ENCODE measurements at regions of chr3 and their contacts with region 1.

Region 1: GRCh38 chr3:129673882-129674797 is 67.7 kb upstream of the PLXND1 start:
- DNase-seq: peak; percentile 27
- CTCF ChIP-seq: no peak

Region 2: DNA sequence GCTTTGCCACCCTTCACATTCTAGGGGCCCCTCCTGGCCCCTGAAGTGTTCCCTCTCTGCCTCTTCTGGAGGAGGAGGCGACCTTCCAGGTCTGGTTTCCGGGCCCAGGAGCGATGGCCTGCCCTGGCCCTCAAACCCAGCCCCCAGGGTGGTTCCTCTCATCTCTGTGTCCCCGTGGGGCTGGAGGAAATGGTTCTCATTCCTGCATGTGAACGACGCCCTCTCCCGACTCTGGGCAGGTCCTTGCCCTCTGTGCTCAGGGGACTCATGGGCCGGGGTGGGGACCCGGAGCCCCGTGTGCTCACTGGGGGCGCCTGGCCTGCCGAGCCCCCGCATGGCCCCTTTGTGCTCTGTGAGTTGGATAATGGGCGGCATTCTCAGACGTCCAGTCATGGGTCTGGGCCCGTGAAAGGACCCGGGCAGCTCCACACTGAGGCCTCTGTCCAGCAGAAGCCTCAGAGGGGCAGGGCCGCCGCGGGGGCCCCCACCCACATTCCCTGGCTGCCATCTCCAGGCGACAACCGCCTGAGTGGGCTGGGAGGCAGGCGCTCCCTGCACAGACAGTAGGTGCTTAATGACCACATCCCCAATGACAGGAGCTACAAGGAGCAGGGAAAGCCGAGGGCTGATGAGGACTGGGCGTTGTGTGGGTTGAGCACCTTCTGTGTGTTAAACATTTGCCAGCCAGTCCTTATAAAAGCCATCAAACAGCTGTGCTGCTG is 62.2 kb before region 1 on chr3:
- CTCF ChIA-PET with region 1: no interaction called
- POLR2A ChIA-PET with region 1: no interaction called
- DNase-seq: no peak
- CTCF ChIP-seq: no peak

Region 3: GRCh38 chr3:129690406-129690805 is 16.3 kb after region 1 on chr3:
- CTCF ChIA-PET with region 1: interaction called, 13 read pairs
- POLR2A ChIA-PET with region 1: no interaction called
- DNase-seq: peak; percentile 54
- CTCF ChIP-seq: no peak

Region 4: DNA sequence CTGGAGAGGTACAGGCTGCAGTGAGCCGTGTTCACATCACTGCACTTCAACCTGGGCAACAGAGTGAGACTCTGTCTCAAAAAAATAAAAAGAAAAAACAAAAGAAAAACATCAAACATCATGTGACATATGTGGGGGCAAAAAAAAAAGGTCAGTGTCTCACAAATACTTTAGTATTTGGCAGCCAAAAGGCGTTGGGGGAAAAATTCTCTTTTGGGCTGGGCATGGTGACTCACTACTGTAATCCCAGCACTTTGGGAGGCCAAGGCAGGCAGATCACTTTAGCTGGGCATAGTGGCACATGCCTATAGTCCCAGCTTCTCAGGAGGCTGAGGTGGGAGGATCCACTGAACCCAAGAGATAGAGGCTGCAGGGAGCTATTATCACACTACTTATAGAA is 171.8 kb after region 1 on chr3:
- CTCF ChIA-PET with region 1: no interaction called
- POLR2A ChIA-PET with region 1: no interaction called
- DNase-seq: no peak
- CTCF ChIP-seq: no peak

Region 5: DNA sequence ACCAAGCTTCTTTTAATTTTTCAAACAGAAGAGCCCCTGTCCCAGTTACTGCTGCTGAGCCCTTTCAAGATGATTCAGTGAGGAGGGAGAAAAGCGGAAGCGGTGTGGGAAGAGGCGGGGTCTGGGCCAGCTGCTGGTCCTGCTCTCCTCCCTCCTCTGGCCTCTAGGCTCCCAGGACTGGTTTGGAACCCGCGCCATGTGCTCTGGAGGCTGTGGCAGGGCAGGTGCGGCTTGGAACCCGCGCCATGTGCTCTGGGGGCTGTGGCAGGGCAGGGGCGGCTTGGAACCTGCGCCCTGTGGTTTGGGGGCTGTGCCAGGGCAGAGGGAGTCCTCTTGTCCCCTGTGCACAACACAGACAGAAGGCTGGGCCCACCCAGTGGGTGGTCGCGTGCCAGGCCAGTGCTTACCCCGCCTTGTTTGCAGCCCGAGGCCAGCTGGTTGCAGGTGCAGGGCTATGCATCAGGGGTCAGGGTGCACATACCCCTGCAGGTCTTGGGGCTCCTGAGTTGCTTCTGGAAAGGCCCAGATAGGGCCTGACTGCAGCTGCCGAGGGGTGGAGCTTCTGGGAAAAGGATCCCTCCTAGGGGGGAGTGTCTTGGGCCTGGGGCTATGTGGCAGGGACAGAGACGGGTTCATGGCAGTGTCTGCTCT is 419.7 kb after region 1 on chr3:
- CTCF ChIA-PET with region 1: no interaction called
- POLR2A ChIA-PET with region 1: no interaction called
- DNase-seq: peak; percentile 54
- CTCF ChIP-seq: no peak

Measured in GM10248 (cell line).